GM13976 (cell line): ENCODE measurements at regions of chr2 and their contacts with region 1.

Region 1: GRCh38 chr2:121076885-121077549 is 208.0 kb downstream of the TFCP2L1 start:
- DNase-seq: peak; percentile 85
- CTCF ChIP-seq: peak; percentile 99

Region 2: DNA sequence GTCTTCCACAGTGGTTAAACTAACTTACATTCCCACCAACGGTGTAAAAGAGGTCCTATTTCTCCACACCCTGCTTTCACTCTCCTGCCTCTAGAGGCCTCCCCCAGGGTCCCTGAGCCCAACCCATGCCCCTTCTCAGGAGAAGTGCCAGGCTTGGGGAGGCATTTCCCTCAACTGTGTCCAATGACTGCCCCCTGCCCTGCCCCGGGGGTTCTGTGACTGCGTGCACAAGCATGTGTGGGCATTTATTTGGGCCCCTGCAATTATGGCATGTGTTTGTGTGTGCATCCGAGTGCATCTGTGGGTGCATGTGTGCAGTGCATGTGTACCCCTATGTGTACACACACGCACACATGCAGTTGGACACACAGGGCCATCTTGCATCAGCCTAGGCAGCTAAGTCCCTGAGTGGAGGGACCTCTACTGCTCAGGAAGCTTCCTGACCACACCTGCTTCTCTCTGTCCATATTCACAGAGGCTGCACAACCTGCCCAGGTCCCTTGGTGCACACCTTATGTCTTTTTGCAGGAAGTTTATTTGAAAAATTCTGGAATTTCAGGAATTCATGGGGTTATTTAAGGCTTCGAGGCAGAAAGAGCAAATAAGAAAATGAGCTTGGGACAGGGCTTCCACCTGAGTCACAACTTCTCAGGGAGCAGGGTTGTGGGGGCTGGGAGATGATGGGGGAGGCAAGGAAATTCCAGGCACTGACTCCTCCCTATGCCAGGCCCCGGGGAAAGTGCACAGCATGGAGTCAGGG is 673.6 kb before region 1 on chr2:
- in situ Hi-C with region 1: no loop called
- DNase-seq: no peak
- CTCF ChIP-seq: no peak

Region 3: GRCh38 chr2:120693121-120693520 is 383.9 kb before region 1 on chr2:
- in situ Hi-C with region 1: loop called (anchors 10 kb)
- DNase-seq: no peak
- CTCF ChIP-seq: no peak